RWPE1 (cell line): ENCODE measurements at regions of chr2 and their contacts with region 1.

Region 1: GRCh38 chr2:20962939-20963557 is 80.8 kb downstream of the APOB start:
- DNase-seq: peak; percentile 62
- H3K27ac ChIP-seq: no peak overlapping the region
- CTCF ChIP-seq: peak; percentile 88

Region 2: DNA sequence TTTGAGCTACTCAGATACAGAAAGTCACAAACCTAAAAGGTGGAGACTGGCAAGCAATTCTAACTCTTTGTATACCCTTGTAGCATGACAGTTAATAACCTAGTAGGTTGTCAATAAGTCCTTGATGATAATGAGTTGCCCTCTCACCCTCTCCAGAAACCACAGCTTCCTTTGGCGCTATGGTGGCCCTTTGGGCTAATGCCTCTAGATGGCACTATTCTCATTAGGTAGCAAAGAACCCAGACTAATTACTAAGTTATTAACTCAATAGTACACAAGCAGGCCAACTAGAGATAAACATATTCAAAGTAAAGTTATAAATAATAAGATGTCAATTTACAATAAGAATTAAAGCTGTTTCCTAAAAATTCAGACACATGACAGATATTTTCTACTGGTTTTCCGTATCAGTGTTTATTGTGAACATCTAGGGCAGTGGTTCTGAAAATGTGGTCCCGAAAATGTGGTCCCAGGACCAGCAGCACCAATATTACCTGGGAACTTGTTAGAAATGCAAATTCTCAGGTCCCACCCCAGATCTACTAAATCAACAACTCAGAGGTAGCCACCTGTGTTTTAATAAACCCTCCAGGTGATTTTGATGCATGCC is 181.3 kb before region 1 on chr2:
- CTCF ChIA-PET with region 1: interaction called, 62 read pairs
- POLR2A ChIA-PET with region 1: no interaction called
- DNase-seq: peak; percentile 44
- H3K27ac ChIP-seq: no peak overlapping the region
- CTCF ChIP-seq: peak; percentile 80

Region 3: GRCh38 chr2:21096458-21096857 is 133.4 kb after region 1 on chr2:
- CTCF ChIA-PET with region 1: no interaction called
- POLR2A ChIA-PET with region 1: no interaction called
- DNase-seq: no peak
- H3K27ac ChIP-seq: no peak overlapping the region
- CTCF ChIP-seq: no peak

Region 4: DNA sequence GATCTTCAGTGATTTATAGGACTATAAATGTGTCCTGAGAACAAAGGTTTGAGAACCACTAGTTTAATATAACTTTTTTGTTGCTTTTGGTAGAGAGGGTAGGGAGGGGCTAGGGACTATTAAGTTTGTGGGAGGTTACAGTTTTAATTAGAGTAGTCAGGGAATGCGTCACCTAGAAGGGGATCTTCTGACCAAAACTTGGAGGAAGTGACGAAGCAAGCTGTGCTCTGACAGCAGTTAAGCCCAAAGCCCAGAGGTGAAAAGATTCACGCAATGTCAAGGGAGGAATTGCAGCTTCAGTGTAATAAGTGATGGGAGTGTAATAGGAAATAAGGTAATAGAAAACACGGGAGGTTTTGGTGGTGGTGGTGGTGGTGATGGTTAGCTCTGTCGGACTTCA is 168.8 kb after region 1 on chr2:
- CTCF ChIA-PET with region 1: no interaction called
- POLR2A ChIA-PET with region 1: no interaction called
- DNase-seq: no peak
- H3K27ac ChIP-seq: no peak overlapping the region
- CTCF ChIP-seq: no peak